Esophagus muscularis mucosa (tissue), 4 donors: ENCODE measurements at regions of chr9 and their contacts with region 1.

Region 1: GRCh38 chr9:32378993-32379729 is 5.3 kb upstream of the ACO1 start:
- DNase-seq: peak; percentile 66
- H3K4me3 ChIP-seq: no peak overlapping the region
- H3K27ac ChIP-seq: no peak overlapping the region
- H3K4me1 ChIP-seq: peaks cover 5 to 19% (median 13%) of the 10 kb centered on the region in 4 donors
- H3K27me3 ChIP-seq: no peaks in the 10 kb centered on the region
- CTCF ChIP-seq: peak; percentile 69 to 83 (median 71)
- EP300 ChIP-seq: no peak
- POLR2A ChIP-seq: no peak

Region 2: DNA sequence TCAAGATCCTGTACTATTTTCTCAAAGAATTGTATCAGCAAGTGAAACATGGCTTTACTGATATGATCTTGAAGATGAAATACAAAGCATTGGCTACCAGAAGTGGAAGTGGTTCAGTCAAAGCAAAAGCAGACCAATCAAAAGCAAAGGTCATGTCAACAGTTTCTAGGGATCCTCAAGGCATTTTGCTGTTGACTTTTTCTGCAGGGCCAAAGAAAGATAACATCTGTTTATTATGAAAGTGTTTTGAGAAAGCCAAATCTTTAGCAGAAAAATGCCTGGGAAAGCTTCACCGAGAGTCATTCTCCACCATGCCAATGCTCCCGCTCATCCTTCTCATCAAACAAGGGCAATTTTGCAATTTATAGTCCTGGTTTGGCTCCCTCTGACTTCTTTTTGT is 85.1 kb before region 1 on chr9:
- intact Hi-C with region 1: no loop called
- DNase-seq: no peak
- H3K4me3 ChIP-seq: no peak overlapping the region
- H3K27ac ChIP-seq: no peak overlapping the region
- H3K4me1 ChIP-seq: no peaks in the 10 kb centered on the region
- H3K27me3 ChIP-seq: no peaks in the 10 kb centered on the region
- CTCF ChIP-seq: no peak
- EP300 ChIP-seq: no peak
- POLR2A ChIP-seq: no peak

Region 3: DNA sequence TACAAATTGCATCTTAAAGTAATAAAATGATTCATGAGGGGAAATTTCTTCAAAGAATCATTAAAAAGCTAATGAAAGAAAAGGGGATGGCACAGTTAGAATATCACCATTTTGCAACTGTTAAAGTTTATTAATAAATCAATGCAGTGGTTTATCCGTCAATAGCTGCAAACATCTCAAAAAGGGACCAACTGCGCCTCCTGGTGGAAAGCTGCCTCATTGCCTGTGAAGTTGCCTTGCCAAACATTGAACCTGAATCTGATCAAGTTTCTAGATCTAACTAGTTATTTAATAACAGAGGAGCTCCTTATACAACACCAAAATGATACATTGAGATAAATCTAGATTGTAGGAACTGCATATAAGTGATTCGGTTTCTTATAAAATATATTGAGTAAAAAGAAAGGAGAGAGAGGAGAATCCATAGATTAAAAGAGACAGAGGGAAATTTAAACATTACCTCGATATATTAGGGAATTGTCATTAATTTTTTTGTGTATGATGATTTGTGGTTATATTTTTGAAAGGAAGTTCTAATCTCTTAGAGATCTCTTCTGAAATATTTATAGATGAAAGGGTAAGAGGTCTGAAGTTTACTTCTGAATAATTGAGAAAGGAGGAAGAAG is 200.7 kb after region 1 on chr9:
- intact Hi-C with region 1: loop called (anchors 2 kb)
- DNase-seq: no peak
- H3K4me3 ChIP-seq: no peak overlapping the region
- H3K27ac ChIP-seq: no peak overlapping the region
- H3K4me1 ChIP-seq: peaks cover 0 to 8% (median 4%) of the 10 kb centered on the region in 4 donors
- H3K27me3 ChIP-seq: peaks cover 0 to 3% (median 0%) of the 10 kb centered on the region in 4 donors
- CTCF ChIP-seq: peak; percentile 86 to 90 (median 89)
- EP300 ChIP-seq: no peak
- POLR2A ChIP-seq: no peak

Region 4: DNA sequence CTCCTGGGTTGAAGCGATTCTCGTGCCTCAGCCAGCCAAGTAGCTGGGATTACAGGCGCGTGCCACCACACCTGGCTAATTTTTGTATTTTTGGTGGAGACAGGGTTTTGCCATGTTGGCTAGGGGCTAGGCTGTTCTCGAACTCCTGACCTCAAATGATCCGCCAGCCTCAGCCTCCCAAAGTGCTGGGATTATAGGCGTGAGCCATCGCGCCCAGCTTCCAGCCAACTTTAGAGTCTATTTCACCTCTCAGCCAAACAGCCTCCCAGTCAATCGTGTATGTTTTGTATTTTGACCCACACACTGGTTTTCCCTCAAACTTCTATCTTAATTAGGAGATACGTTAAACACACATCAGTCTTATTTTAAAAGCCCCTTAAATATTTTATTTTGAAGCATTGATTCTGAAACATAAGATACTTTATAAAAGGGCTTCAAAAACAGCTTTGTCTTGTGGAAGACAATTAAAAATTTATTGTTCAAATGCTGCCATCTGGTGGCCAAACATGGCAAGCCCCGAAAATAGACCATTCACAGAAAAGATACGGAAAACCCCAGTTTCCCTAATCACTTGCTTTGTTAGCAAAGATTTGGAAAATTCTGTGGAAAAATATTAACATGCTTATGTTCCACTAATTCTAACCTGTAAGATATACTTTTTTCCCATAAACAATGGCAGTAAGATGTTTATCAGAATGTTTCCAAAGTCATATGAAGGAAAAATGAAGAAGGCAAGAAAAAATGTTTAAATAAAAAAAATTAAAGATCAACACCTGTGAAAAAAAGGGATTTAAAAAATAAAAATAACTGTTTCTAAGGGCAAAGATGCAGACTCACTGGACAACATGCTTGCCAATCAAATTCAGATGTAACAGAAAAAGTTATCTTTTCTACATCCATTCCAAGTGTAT is 589.2 kb after region 1 on chr9:
- intact Hi-C with region 1: loop called (anchors 5 kb)
- DNase-seq: no peak
- H3K4me3 ChIP-seq: no peak overlapping the region
- H3K27ac ChIP-seq: no peak overlapping the region
- H3K4me1 ChIP-seq: peaks cover 0 to 5% (median 2%) of the 10 kb centered on the region in 4 donors
- H3K27me3 ChIP-seq: no peaks in the 10 kb centered on the region
- CTCF ChIP-seq: peak; percentile 76 to 85 (median 82)
- EP300 ChIP-seq: no peak
- POLR2A ChIP-seq: no peak